ENCODE measurements at regions of chr1 and their contacts with region 1.

Region 1: GRCh38 chr1:29245876-29246275 is 9.6 kb downstream of the PTPRU start:
- DNase-seq: peak; percentile 25

Region 2: DNA sequence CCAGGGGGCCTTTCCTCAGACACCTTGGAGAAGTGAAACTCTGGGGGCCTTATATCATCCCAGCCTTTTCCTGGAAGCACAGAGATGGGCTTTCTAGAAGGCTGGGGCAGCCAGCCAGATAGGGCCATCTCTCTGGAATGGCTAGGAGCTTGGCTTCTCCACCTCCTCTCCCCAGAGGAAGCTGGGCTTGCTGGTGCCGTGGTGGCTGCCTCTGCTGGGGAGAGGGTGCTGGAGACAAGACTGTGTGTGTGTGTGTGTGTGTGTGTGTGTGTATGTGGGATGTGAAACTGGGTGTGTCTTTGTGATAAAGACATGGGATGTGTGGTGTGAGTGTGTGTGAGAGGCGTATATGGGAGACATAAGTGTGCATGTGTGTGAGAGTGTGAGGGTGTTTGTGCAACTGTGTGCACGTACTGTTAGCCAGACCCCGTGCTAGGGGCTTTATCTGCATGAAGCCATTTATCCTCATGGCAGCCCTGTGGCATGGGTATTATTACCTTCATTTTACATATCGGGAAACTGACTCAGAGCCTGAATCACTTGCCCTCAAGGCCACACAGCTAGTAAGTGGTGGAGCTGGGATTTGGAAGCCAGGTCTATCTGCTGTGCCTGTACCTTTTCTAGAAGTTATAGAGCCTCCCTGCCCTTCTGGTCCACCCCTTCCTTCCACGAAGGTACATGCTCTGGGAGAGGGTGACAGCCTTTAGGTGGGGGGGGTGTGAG is 34.7 kb after region 1 on chr1:
- intact Hi-C with region 1: loop called in 1 of 2 experiments (anchors 1 kb)
- DNase-seq: no peak

Region 3: GRCh38 chr1:29341936-29342335 is 96.1 kb after region 1 on chr1:
- intact Hi-C with region 1: no loop called
- DNase-seq: no peak